ENCODE measurements at regions of chr7 and their contacts with region 1.

Region 1: GRCh38 chr7:87188930-87189329 is 30.6 kb downstream of the TMEM243 start:
- DNase-seq: no peak
- ATAC-seq: no peak
- H3K4me3 ChIP-seq: no peak overlapping the region
- H3K4me3 Mint-ChIP-seq: no peak overlapping the region
- H3K27ac ChIP-seq: no peak overlapping the region
- H3K27ac Mint-ChIP-seq: no peak overlapping the region
- H3K4me1 ChIP-seq: no peaks in the 10 kb centered on the region
- H3K4me1 Mint-ChIP-seq: peaks cover 28% of the 10 kb centered on the region
- H3K27me3 ChIP-seq: no peaks in the 10 kb centered on the region
- H3K27me3 Mint-ChIP-seq: no peaks in the 10 kb centered on the region
- CTCF ChIP-seq: no peak

Region 2: DNA sequence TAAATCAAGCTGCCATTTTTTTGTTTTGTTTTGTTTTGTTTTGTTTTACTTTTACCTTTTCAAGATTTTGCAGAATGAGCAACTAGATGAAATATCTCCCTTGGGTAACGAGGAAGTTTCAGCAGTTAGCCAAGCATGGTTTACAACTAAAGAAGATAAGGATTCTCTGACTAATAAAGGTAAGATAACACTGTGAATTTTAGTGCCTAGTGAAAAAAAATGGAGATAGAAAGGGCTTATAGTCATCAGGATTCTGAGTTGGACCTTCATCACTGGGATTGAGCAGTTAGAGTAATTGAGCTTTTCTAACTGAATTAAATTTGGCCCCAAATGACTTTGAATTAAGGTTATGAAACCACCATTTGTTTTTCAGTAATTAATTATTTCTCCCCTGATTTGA is 15.5 kb before region 1 on chr7:
- CTCF ChIA-PET with region 1: interaction called, 4 read pairs
- POLR2A ChIA-PET with region 1: no interaction called
- intact Hi-C with region 1: loop called in 1 of 2 experiments (anchors 1 kb)
- DNase-seq: no peak
- ATAC-seq: no peak
- H3K4me3 ChIP-seq: no peak overlapping the region
- H3K4me3 Mint-ChIP-seq: no peak overlapping the region
- H3K27ac ChIP-seq: no peak overlapping the region
- H3K27ac Mint-ChIP-seq: peak overlapping the region; percentile 37
- H3K4me1 ChIP-seq: no peaks in the 10 kb centered on the region
- H3K4me1 Mint-ChIP-seq: peaks cover 39% of the 10 kb centered on the region
- H3K27me3 ChIP-seq: no peaks in the 10 kb centered on the region
- H3K27me3 Mint-ChIP-seq: no peaks in the 10 kb centered on the region
- CTCF ChIP-seq: no peak

Region 3: DNA sequence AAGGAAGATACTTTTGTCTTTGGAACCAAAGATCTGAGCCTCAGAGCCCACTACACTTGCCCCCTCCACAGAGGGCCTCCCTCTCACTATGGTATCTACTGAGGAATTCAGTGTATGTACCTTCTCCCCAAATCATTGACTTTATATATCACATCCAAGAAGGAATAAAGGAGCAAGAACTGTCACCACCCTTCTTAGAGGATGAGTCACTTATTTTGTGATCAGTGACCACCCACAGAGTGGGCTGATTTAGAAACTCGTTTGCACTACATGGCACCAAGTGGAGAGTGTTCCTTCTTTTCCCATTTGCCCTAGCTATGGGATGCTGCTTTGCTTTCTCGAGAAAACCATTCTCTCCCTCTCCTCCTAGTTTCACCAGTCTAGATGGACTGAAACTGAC is 24.9 kb after region 1 on chr7:
- CTCF ChIA-PET with region 1: interaction called, 5 read pairs
- POLR2A ChIA-PET with region 1: interaction called, 28 read pairs
- intact Hi-C with region 1: loop called in 1 of 2 experiments (anchors 5 kb)
- DNase-seq: no peak
- ATAC-seq: no peak
- H3K4me3 ChIP-seq: no peak overlapping the region
- H3K4me3 Mint-ChIP-seq: peak overlapping the region; percentile 81
- H3K27ac ChIP-seq: peak overlapping the region in 1 of 2 experiments; percentile 60
- H3K27ac Mint-ChIP-seq: peak overlapping the region; percentile 95
- H3K4me1 ChIP-seq: peaks cover 87% of the 10 kb centered on the region
- H3K4me1 Mint-ChIP-seq: peaks cover 87% of the 10 kb centered on the region
- H3K27me3 ChIP-seq: no peaks in the 10 kb centered on the region
- H3K27me3 Mint-ChIP-seq: no peaks in the 10 kb centered on the region
- CTCF ChIP-seq: no peak

Measured in CD8-positive, alpha-beta T cell (primary cell).